ENCODE measurements at regions of chr3 and their contacts with region 1.

Region 1: GRCh38 chr3:133661454-133662277 is at the start of gene TOPBP1:
- DNase-seq: peak; percentile 95
- ATAC-seq: peak; percentile 86
- H3K4me3 Mint-ChIP-seq: peak within 1 kb of the TSS; percentile 99
- H3K27ac Mint-ChIP-seq: peak within 1 kb of the TSS; percentile 100
- H3K4me1 Mint-ChIP-seq: peaks cover 38% of the 10 kb centered on the region
- H3K27me3 Mint-ChIP-seq: no peaks in the 10 kb centered on the region
- CTCF ChIP-seq: no peak
- total RNA-seq, gene TOPBP1: 80.1 to 83.5 TPM

Region 2: GRCh38 chr3:133805527-133806475 is 144.1 kb after region 1 on chr3 and contains the start of gene SRPRB:
- CTCF ChIA-PET with region 1: interaction called, 6 read pairs
- POLR2A ChIA-PET with region 1: interaction called, 7 read pairs
- intact Hi-C with region 1: loop called (anchors 5 kb)
- DNase-seq: peak; percentile 97
- ATAC-seq: peak; percentile 98
- H3K4me3 Mint-ChIP-seq: peak within 1 kb of the TSS; percentile 98
- H3K27ac Mint-ChIP-seq: peak within 1 kb of the TSS; percentile 97
- H3K4me1 Mint-ChIP-seq: peaks cover 37% of the 10 kb centered on the region
- H3K27me3 Mint-ChIP-seq: peaks cover 2% of the 10 kb centered on the region
- CTCF ChIP-seq: no peak
- total RNA-seq, gene SRPRB: 63.8 to 65.8 TPM

Region 3: GRCh38 chr3:133927540-133928066 is 265.9 kb after region 1 on chr3:
- CTCF ChIA-PET with region 1: interaction called, 4 read pairs
- POLR2A ChIA-PET with region 1: no interaction called
- intact Hi-C with region 1: loop called (anchors 5 kb)
- DNase-seq: peak; percentile 75
- ATAC-seq: peak; percentile 87
- H3K4me3 Mint-ChIP-seq: peak overlapping the region; percentile 49
- H3K27ac Mint-ChIP-seq: no peak overlapping the region
- H3K4me1 Mint-ChIP-seq: peaks cover 6% of the 10 kb centered on the region
- H3K27me3 Mint-ChIP-seq: peaks cover 4% of the 10 kb centered on the region
- CTCF ChIP-seq: peak; percentile 78

Measured in activated CD8-positive, alpha-beta T cell treated with anti-CD3 and anti-CD28 coated beads for 36 hours (primary cell).